GM10248 (cell line): ENCODE measurements at regions of chr15 and their contacts with region 1.

Region 1: DNA sequence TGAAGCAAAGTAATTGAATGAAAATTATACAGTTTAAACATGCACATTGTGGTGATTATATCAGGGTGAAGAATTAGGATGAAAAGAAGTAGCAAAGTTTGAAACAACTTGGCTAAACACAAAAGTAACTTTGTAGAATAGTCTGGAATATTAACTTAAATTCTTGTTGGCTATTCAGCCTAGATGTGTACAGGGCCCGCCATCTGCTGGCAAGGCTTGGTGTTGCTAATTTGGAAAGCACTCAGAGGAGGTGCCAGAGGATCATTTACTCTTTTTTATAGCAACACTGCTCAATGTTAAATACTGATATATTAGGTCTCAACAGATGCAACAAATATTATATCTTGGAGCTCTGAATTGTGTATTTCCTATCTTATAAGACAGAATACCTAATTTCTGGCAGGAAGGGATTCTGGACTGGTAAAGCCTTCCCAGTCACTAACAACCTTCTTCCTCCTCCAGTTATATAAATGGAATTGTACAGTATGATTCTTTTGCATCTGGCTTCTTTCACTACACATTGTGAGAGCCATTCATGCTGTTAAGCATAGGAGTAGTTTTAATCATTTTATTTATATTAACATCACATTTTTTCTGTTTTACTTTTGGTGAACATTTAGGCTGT is 36.1 kb downstream of the TTC23 start:
- DNase-seq: peak; percentile 67
- CTCF ChIP-seq: peak; percentile 77

Region 2: GRCh38 chr15:98914626-98915025 is 298.7 kb before region 1 on chr15:
- CTCF ChIA-PET with region 1: no interaction called
- POLR2A ChIA-PET with region 1: no interaction called
- DNase-seq: no peak
- CTCF ChIP-seq: no peak

Region 3: GRCh38 chr15:99096894-99097426 is 116.3 kb before region 1 on chr15:
- CTCF ChIA-PET with region 1: interaction called, 57 read pairs
- POLR2A ChIA-PET with region 1: no interaction called
- DNase-seq: no peak
- CTCF ChIP-seq: no peak

Region 4: GRCh38 chr15:99123706-99124451 is 89.4 kb before region 1 on chr15:
- CTCF ChIA-PET with region 1: no interaction called
- POLR2A ChIA-PET with region 1: no interaction called
- DNase-seq: no peak
- CTCF ChIP-seq: no peak

Region 5: DNA sequence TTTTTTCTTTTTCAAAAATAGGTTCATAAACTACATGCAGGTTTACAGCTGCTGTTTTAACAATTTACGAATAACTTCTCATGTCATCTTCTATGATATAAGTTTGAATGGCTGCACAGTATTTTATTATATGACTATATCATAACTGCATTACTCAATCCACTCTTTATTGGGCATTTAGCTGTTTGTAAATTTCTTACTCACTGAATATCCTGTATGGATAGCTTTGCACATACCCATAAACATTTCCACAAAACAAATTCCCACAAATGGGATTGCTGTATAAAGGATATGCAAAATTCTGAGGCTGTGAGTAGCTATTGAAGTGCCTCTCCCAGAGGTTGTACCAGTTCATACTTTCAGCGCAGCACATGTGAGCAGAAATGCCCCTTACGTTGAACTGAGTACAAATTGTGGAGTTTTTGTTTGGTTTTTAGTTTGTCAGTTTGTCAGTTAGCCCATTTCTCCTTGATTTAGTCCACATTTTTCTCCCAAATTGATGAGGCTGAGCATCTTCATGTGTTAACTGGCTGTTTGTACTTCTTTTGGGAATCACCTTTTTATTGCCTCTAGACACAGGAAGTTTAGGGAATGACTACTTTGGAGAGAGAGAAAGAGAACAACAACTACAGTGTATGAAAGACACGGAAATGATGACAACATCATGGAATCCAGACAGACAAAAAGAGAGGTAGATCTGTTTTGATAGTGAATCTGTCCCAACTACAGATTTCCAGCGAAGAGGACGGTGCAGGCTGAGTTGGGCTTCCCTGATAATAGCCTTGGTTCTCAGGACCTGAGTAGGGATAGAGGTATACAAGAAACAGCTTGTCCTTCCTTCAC is 11.3 kb after region 1 on chr15:
- CTCF ChIA-PET with region 1: interaction called, 19 read pairs
- POLR2A ChIA-PET with region 1: no interaction called
- DNase-seq: no peak
- CTCF ChIP-seq: no peak

Region 6: GRCh38 chr15:99239545-99240198 is 26.4 kb after region 1 on chr15:
- CTCF ChIA-PET with region 1: no interaction called
- POLR2A ChIA-PET with region 1: no interaction called
- DNase-seq: peak; percentile 65
- CTCF ChIP-seq: no peak

Region 7: GRCh38 chr15:99361541-99362185 is 148.4 kb after region 1 on chr15:
- CTCF ChIA-PET with region 1: no interaction called
- POLR2A ChIA-PET with region 1: no interaction called
- DNase-seq: no peak
- CTCF ChIP-seq: no peak